AG04449 (cell line): ENCODE measurements at regions of chr3 and their contacts with region 1.

Region 1: GRCh38 chr3:115783938-115784738 is 160.8 kb downstream of the GAP43 start:
- DNase-seq: no peak
- H3K4me3 ChIP-seq: peak overlapping the region; percentile 67
- CTCF ChIP-seq: peak; percentile 96

Region 2: GRCh38 chr3:115475178-115476041 is 308.7 kb before region 1 on chr3:
- CTCF ChIA-PET with region 1: no interaction called
- POLR2A ChIA-PET with region 1: no interaction called
- DNase-seq: no peak
- H3K4me3 ChIP-seq: no peak overlapping the region
- CTCF ChIP-seq: no peak

Region 3: GRCh38 chr3:115685097-115685496 is 99.0 kb before region 1 on chr3:
- CTCF ChIA-PET with region 1: interaction called, 10 read pairs
- POLR2A ChIA-PET with region 1: no interaction called
- DNase-seq: no peak
- H3K4me3 ChIP-seq: no peak overlapping the region
- CTCF ChIP-seq: no peak

Region 4: GRCh38 chr3:115713284-115713683 is 70.9 kb before region 1 on chr3:
- CTCF ChIA-PET with region 1: interaction called, 29 read pairs
- POLR2A ChIA-PET with region 1: interaction called, 6 read pairs
- DNase-seq: no peak
- H3K4me3 ChIP-seq: no peak overlapping the region
- CTCF ChIP-seq: no peak

Region 5: GRCh38 chr3:115772951-115773350 is 11.2 kb before region 1 on chr3:
- CTCF ChIA-PET with region 1: interaction called, 30 read pairs
- POLR2A ChIA-PET with region 1: no interaction called
- DNase-seq: no peak
- H3K4me3 ChIP-seq: no peak overlapping the region
- CTCF ChIP-seq: no peak

Region 6: DNA sequence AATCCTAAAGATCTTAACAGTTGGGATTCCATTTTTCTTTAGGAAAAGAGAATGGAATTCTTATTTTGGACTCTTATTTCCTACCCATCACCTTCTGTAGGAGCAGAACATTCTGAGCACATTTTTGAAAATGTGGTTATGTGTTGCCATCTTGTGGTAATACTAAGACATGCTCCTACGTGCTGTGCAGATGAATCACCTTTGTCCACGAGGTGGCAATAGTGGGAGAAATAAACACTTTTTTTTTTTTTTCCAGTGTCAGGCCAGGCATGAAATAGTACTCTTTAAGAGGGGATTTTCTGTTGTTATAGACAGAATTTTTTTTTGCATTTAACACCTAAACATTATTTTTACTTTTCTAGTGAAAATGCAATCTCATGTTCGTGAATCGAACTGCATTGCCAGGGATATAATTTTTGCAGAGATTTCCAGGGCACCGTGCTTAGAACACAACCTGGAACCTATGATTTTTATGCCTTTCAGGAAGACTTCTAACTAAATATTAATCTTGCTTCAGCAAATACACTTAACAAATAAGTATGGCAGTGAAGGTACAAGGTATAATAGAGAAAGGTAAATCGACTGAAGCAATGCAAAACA is 35.7 kb after region 1 on chr3:
- CTCF ChIA-PET with region 1: interaction called, 11 read pairs
- POLR2A ChIA-PET with region 1: no interaction called
- DNase-seq: no peak
- H3K4me3 ChIP-seq: no peak overlapping the region
- CTCF ChIP-seq: peak; percentile 87